ENCODE measurements at regions of chr7 and their contacts with region 1.

Region 1: GRCh38 chr7:5177060-5177459 is 13.0 kb upstream of the WIPI2 start:
- DNase-seq: no peak
- ATAC-seq: no peak
- H3K4me3 ChIP-seq: no peak overlapping the region
- H3K4me3 Mint-ChIP-seq: no peak overlapping the region
- H3K27ac ChIP-seq: no peak overlapping the region
- H3K27ac Mint-ChIP-seq: no peak overlapping the region
- H3K4me1 ChIP-seq: no peaks in the 10 kb centered on the region
- H3K4me1 Mint-ChIP-seq: peaks cover 2% of the 10 kb centered on the region
- H3K27me3 ChIP-seq: no peaks in the 10 kb centered on the region
- H3K27me3 Mint-ChIP-seq: no peaks in the 10 kb centered on the region
- CTCF ChIP-seq: no peak

Region 2: GRCh38 chr7:4797858-4798705 is 379.0 kb before region 1 on chr7:
- CTCF ChIA-PET with region 1: interaction called, 3 read pairs
- POLR2A ChIA-PET with region 1: no interaction called
- intact Hi-C with region 1: loop called in 1 of 2 experiments (anchors 1 kb)
- DNase-seq: peak; percentile 27 to 76 (median 59)
- ATAC-seq: peak; percentile 93
- H3K4me3 ChIP-seq: no peak overlapping the region
- H3K4me3 Mint-ChIP-seq: no peak overlapping the region
- H3K27ac ChIP-seq: no peak overlapping the region
- H3K27ac Mint-ChIP-seq: no peak overlapping the region
- H3K4me1 ChIP-seq: peaks cover under 1% of the 10 kb centered on the region
- H3K4me1 Mint-ChIP-seq: peaks cover 3% of the 10 kb centered on the region
- H3K27me3 ChIP-seq: no peaks in the 10 kb centered on the region
- H3K27me3 Mint-ChIP-seq: no peaks in the 10 kb centered on the region
- CTCF ChIP-seq: peak; percentile 99

Region 3: GRCh38 chr7:4849369-4849768 is 327.7 kb before region 1 on chr7:
- CTCF ChIA-PET with region 1: no interaction called
- POLR2A ChIA-PET with region 1: no interaction called
- intact Hi-C with region 1: loop called (anchors 1 to 5 kb)
- DNase-seq: peak in 3 of 9 experiments; percentile 19 to 55 (median 45)
- ATAC-seq: peak; percentile 64
- H3K4me3 ChIP-seq: no peak overlapping the region
- H3K4me3 Mint-ChIP-seq: no peak overlapping the region
- H3K27ac ChIP-seq: no peak overlapping the region
- H3K27ac Mint-ChIP-seq: no peak overlapping the region
- H3K4me1 ChIP-seq: no peaks in the 10 kb centered on the region
- H3K4me1 Mint-ChIP-seq: peaks cover 2% of the 10 kb centered on the region
- H3K27me3 ChIP-seq: no peaks in the 10 kb centered on the region
- H3K27me3 Mint-ChIP-seq: peaks cover 16% of the 10 kb centered on the region
- CTCF ChIP-seq: peak; percentile 13

Region 4: GRCh38 chr7:5083311-5083711 is 93.7 kb before region 1 on chr7:
- CTCF ChIA-PET with region 1: interaction called, 12 read pairs
- POLR2A ChIA-PET with region 1: no interaction called
- intact Hi-C with region 1: loop called (anchors 1 kb)
- DNase-seq: no peak
- ATAC-seq: no peak
- H3K4me3 ChIP-seq: no peak overlapping the region
- H3K4me3 Mint-ChIP-seq: no peak overlapping the region
- H3K27ac ChIP-seq: no peak overlapping the region
- H3K27ac Mint-ChIP-seq: no peak overlapping the region
- H3K4me1 ChIP-seq: peaks cover 3% of the 10 kb centered on the region
- H3K4me1 Mint-ChIP-seq: peaks cover 3% of the 10 kb centered on the region
- H3K27me3 ChIP-seq: peaks cover 0 to 2% of the 10 kb centered on the region in 2 experiments
- H3K27me3 Mint-ChIP-seq: no peaks in the 10 kb centered on the region
- CTCF ChIP-seq: no peak

Region 5: GRCh38 chr7:5088906-5089305 is 88.2 kb before region 1 on chr7:
- CTCF ChIA-PET with region 1: interaction called, 12 read pairs
- POLR2A ChIA-PET with region 1: no interaction called
- intact Hi-C with region 1: loop called (anchors 1 kb)
- DNase-seq: no peak
- ATAC-seq: no peak
- H3K4me3 ChIP-seq: no peak overlapping the region
- H3K4me3 Mint-ChIP-seq: no peak overlapping the region
- H3K27ac ChIP-seq: no peak overlapping the region
- H3K27ac Mint-ChIP-seq: no peak overlapping the region
- H3K4me1 ChIP-seq: peaks cover 3% of the 10 kb centered on the region
- H3K4me1 Mint-ChIP-seq: peaks cover 3% of the 10 kb centered on the region
- H3K27me3 ChIP-seq: peaks cover 0 to 2% of the 10 kb centered on the region in 2 experiments
- H3K27me3 Mint-ChIP-seq: no peaks in the 10 kb centered on the region
- CTCF ChIP-seq: no peak

Region 6: DNA sequence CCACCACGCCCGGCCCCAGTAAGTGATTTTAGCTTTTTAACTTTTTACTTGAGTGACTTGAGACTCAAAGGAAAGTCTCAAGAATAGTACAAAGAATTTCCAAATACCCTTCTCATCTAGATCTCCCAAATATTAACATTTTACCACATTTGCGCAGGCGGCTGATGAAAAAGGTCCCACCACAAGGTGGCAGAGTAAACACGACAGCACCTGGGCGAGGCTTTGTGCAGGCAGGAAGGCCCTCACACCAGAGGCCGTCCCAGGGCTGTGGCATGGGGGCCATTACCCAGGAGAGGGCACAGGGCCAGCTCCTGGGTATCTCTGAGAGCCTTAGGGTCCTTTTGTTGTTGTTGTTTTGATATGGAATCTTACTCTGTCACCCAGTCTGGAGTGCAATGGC is 37.1 kb before region 1 on chr7:
- CTCF ChIA-PET with region 1: interaction called, 5 read pairs
- POLR2A ChIA-PET with region 1: interaction called, 4 read pairs
- intact Hi-C with region 1: loop called (anchors 1 to 5 kb)
- DNase-seq: peak in 4 of 9 experiments; percentile 20 to 32 (median 29)
- ATAC-seq: no peak
- H3K4me3 ChIP-seq: no peak overlapping the region
- H3K4me3 Mint-ChIP-seq: no peak overlapping the region
- H3K27ac ChIP-seq: no peak overlapping the region
- H3K27ac Mint-ChIP-seq: no peak overlapping the region
- H3K4me1 ChIP-seq: peaks cover 4% of the 10 kb centered on the region
- H3K4me1 Mint-ChIP-seq: peaks cover 20% of the 10 kb centered on the region
- H3K27me3 ChIP-seq: no peaks in the 10 kb centered on the region
- H3K27me3 Mint-ChIP-seq: no peaks in the 10 kb centered on the region
- CTCF ChIP-seq: no peak

Measured in CD8-positive, alpha-beta T cell (primary cell).